Activated naive CD4-positive, alpha-beta T cell treated with anti-CD3 and anti-CD28 coated beads for 36 hours (primary cell): ENCODE measurements at regions of chr17 and their contacts with region 1.

Region 1: DNA sequence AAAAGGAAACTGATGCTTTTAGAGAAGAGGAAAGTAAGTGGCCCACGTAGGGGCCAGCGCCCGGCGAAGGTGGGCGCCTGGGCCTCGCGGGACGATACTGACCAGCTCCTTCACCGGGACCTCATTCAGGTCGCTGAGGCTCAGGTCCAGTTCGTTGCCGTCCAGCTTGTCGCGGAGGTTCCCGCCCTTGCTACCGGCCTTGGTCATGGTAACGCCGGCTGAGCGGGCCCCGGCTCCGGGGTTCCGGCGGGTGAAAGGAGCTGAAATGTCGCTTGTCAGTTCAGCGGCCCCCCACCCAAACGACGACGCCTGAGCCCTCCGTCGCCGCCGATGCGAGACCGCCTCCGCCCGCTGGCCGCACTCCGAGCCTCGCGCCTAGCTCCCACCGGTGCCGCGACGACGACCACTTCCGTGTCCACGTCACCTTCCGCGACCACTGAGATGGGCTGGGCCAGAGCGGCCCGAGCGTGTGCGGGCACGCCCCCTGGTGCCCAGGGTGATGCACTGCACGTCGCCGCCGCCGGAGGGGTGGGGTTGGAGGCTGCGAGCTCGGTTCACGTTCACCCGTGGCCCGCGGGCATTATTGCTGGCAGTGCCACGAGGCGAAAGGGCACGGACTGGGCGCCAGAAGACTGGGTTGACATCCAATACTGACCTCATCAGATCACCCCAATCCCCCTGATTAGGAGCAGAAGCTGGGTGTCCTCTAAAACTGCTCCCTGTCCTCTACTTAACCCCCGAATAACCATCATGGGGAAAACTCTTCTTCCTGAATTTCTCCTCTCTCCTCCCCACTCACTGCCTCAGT is at the start of gene LRRC59:
- DNase-seq: peak; percentile 92
- H3K4me3 Mint-ChIP-seq: peak within 1 kb of the TSS; percentile 92
- H3K27ac Mint-ChIP-seq: peak within 1 kb of the TSS; percentile 79
- H3K4me1 Mint-ChIP-seq: peaks cover 32% of the 10 kb centered on the region
- H3K27me3 Mint-ChIP-seq: no peaks in the 10 kb centered on the region
- total RNA-seq, gene LRRC59: 48.1 to 50.1 TPM

Region 2: DNA sequence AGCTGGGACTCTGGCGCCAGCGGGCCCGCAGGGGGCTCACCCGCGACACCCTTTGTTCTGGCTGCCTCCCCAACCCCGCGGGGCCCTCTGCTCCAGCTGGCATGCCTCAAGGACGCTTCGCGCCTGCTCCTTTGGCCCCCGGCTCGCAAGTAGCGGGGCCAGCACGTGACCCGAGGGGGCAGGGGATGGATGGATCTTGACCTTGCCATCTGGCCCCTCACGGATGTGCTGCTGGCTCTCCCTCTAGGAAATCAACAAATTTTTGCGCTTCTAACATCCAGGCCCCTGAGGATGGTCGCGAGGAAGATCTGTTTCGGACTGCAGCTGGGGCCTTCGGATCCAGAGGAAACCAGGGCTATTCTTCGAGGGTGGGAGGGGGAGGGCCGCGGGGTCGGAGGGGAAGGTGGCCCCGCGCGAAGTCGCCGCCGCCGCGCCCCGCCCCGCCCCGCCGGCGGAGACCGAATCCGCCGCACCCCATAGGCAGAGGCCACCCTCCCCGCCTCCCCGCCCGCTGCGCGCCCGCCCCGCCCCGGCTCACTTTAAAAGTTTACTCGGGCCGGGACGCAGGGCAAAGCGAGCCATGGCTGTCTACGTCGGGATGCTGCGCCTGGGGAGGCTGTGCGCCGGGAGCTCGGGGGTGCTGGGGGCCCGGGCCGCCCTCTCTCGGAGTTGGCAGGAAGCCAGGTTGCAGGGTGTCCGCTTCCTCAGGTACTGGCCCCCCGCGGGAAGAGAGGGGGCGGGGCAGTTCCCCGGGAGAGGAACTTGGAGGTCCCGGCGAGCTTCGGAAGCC is 28.6 kb after region 1 on chr17 and contains the start of gene ACSF2:
- CTCF ChIA-PET with region 1: interaction called, 25 read pairs
- intact Hi-C with region 1: loop called (anchors 1 kb)
- DNase-seq: peak; percentile 77
- H3K4me3 Mint-ChIP-seq: peak within 1 kb of the TSS; percentile 77
- H3K27ac Mint-ChIP-seq: no peak within 1 kb of the TSS
- H3K4me1 Mint-ChIP-seq: peaks cover 26% of the 10 kb centered on the region
- H3K27me3 Mint-ChIP-seq: no peaks in the 10 kb centered on the region
- total RNA-seq, gene ACSF2: 19.7 to 20.7 TPM

Region 3: GRCh38 chr17:50431233-50431632 is 33.9 kb after region 1 on chr17:
- CTCF ChIA-PET with region 1: interaction called, 19 read pairs
- intact Hi-C with region 1: loop called (anchors 1 kb)
- DNase-seq: no peak
- H3K4me3 Mint-ChIP-seq: no peak overlapping the region
- H3K27ac Mint-ChIP-seq: no peak overlapping the region
- H3K4me1 Mint-ChIP-seq: peaks cover 13% of the 10 kb centered on the region
- H3K27me3 Mint-ChIP-seq: no peaks in the 10 kb centered on the region